ENCODE measurements at regions of chrX and their contacts with region 1.

Region 1: GRCh38 chrX:94633237-94633636 is 959.2 kb downstream of the FAM133A start:
- DNase-seq: no peak
- ATAC-seq: no peak
- H3K4me3 ChIP-seq: no peak overlapping the region
- H3K27ac ChIP-seq: no peak overlapping the region
- H3K4me1 ChIP-seq: no peaks in the 10 kb centered on the region
- H3K27me3 ChIP-seq: no peaks in the 10 kb centered on the region
- CTCF ChIP-seq: no peak
- EP300 ChIP-seq: no peak
- POLR2A ChIP-seq: no peak
- RAD21 ChIP-seq: no peak

Region 2: GRCh38 chrX:93242897-93243296 is 1390.3 kb before region 1 on chrX:
- CTCF ChIA-PET with region 1: no interaction called
- POLR2A ChIA-PET with region 1: no interaction called
- in situ Hi-C with region 1: no loop called
- intact Hi-C with region 1: loop called (anchors 10 kb)
- DNase-seq: no peak
- ATAC-seq: no peak
- H3K4me3 ChIP-seq: no peak overlapping the region
- H3K27ac ChIP-seq: no peak overlapping the region
- H3K4me1 ChIP-seq: no peaks in the 10 kb centered on the region
- H3K27me3 ChIP-seq: no peaks in the 10 kb centered on the region
- CTCF ChIP-seq: no peak
- EP300 ChIP-seq: no peak
- POLR2A ChIP-seq: no peak
- RAD21 ChIP-seq: no peak

Region 3: GRCh38 chrX:94400488-94400887 is 232.7 kb before region 1 on chrX:
- CTCF ChIA-PET with region 1: no interaction called
- POLR2A ChIA-PET with region 1: no interaction called
- in situ Hi-C with region 1: no loop called
- intact Hi-C with region 1: no loop called
- DNase-seq: no peak
- ATAC-seq: no peak
- H3K4me3 ChIP-seq: no peak overlapping the region
- H3K27ac ChIP-seq: no peak overlapping the region
- H3K4me1 ChIP-seq: no peaks in the 10 kb centered on the region
- H3K27me3 ChIP-seq: no peaks in the 10 kb centered on the region
- CTCF ChIP-seq: no peak
- EP300 ChIP-seq: no peak
- POLR2A ChIP-seq: no peak
- RAD21 ChIP-seq: no peak

Region 4: GRCh38 chrX:94751611-94752010 is 118.4 kb after region 1 on chrX:
- CTCF ChIA-PET with region 1: no interaction called
- POLR2A ChIA-PET with region 1: no interaction called
- in situ Hi-C with region 1: no loop called
- intact Hi-C with region 1: no loop called
- DNase-seq: no peak
- ATAC-seq: no peak
- H3K4me3 ChIP-seq: no peak overlapping the region
- H3K27ac ChIP-seq: no peak overlapping the region
- H3K4me1 ChIP-seq: no peaks in the 10 kb centered on the region
- H3K27me3 ChIP-seq: no peaks in the 10 kb centered on the region
- CTCF ChIP-seq: no peak
- EP300 ChIP-seq: no peak
- POLR2A ChIP-seq: no peak
- RAD21 ChIP-seq: no peak